ENCODE measurements at regions of chr3 and their contacts with region 1.

Region 1: DNA sequence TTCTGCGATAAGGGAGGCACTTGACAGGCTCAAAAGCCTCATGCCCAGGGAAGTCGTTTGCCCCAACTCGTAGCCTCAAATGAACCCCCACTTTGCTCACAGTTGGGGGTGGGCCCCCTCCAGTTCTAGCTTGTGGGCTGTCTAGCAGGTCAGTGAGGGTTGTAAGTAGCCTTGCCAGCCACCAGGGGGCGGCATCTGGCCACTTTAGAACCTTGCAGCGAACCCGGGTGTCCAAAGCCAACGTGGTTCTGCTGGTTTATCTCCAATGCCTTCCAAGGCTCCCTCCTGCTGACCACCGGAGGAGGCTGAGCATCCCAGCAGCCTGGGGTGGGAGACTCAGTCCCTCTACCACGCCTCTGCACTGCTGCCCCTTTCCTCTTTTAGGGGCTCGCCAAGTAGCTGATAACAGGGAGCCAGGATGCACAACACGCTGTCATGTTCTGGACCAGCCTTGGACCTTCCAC is 9.2 kb upstream of the RBSN start:
- DNase-seq: peak; percentile 72 to 84
- H3K4me3 ChIP-seq: no peak overlapping the region
- H3K4me3 Mint-ChIP-seq: no peak overlapping the region
- H3K27ac Mint-ChIP-seq: no peak overlapping the region
- H3K4me1 ChIP-seq: peaks cover 9% of the 10 kb centered on the region; the same call in 1 of the 2 replicates
- H3K4me1 Mint-ChIP-seq: peaks cover 12% of the 10 kb centered on the region
- H3K27me3 ChIP-seq: no peaks in the 10 kb centered on the region
- H3K27me3 Mint-ChIP-seq: peaks cover 3% of the 10 kb centered on the region
- CTCF ChIP-seq: peak; percentile 85 to 88

Region 2: DNA sequence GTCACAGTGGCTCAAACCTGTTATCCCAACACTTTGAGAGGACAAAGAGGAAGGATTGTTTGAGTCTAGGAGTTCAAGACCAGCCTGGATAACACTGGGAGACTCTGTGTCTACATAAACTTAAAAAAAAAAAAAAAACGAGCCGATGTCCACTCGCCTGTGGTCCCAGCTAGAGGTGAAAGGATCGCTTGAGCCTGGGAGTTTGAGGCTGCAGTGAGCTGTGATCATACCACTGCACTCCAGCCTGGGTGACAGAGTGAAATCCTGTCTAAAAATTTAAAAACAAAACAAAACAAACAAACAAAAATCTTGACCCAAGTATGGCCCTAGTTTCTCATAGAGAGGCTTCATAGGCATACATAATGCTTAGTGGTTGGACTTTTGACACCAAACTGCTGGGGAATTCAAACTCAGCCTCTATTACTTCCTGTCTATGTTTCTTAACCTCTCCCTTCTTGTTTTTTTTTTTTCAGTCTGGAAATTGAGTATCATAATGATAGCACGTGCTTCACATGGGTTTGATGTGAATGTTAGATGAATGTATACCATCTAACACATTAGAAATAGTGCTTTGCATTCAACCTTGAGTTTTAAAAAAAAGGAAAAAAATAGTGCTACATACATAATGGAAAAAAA is 51.5 kb after region 1 on chr3:
- CTCF ChIA-PET with region 1: no interaction called
- POLR2A ChIA-PET with region 1: no interaction called
- intact Hi-C with region 1: no loop called
- DNase-seq: no peak
- H3K4me3 ChIP-seq: no peak overlapping the region
- H3K4me3 Mint-ChIP-seq: no peak overlapping the region
- H3K27ac Mint-ChIP-seq: no peak overlapping the region
- H3K4me1 ChIP-seq: no peaks in the 10 kb centered on the region
- H3K4me1 Mint-ChIP-seq: no peaks in the 10 kb centered on the region
- H3K27me3 ChIP-seq: no peaks in the 10 kb centered on the region
- H3K27me3 Mint-ChIP-seq: peaks cover 12% of the 10 kb centered on the region
- CTCF ChIP-seq: no peak

Region 3: DNA sequence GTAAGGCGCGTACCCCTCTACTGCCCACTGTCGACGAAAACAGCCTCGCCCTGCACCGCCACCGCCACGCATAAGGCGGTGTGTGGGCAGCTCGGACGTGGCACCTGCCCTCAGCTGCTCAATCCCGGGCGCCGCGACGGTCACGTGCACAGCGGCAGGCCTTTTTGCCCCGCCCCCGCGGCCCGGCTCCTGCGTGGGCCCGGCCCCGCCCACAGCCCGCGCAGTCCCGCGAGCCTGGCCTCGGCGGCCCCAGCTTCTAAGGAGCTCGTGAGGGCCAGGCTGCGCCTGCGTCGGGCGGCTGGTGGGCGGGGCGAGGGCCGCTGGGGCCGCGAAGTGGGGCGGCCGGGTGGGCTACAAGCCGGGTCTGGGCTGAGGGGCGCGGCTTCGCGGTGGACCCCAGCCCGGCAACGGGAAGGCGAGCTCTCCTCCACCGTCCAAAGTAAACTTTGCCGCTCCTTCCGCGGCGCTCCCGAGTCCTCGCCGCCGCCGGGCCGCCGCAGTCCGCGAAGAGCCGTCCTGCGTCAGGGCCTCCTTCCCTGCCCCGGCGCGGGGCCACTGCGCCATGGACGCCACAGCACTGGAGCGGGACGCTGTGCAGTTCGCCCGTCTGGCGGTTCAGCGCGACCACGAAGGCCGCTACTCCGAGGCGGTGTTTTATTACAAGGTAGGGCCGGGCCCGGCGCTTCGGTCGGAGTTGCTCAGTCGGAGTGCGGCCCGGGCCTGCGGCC is 98.0 kb after region 1 on chr3 and contains the start of gene CAPN7:
- CTCF ChIA-PET with region 1: interaction called, 9 read pairs
- POLR2A ChIA-PET with region 1: no interaction called
- intact Hi-C with region 1: loop called (anchors 2 kb)
- DNase-seq: peak; percentile 93 to 96
- H3K4me3 ChIP-seq: peak within 1 kb of the TSS; percentile 85
- H3K4me3 Mint-ChIP-seq: peak within 1 kb of the TSS; percentile 87
- H3K27ac Mint-ChIP-seq: peak within 1 kb of the TSS; percentile 77
- H3K4me1 ChIP-seq: peaks cover 5% of the 10 kb centered on the region; the same call in 1 of the 2 replicates
- H3K4me1 Mint-ChIP-seq: peaks cover 21% of the 10 kb centered on the region
- H3K27me3 ChIP-seq: no peaks in the 10 kb centered on the region
- H3K27me3 Mint-ChIP-seq: no peaks in the 10 kb centered on the region
- CTCF ChIP-seq: peak; percentile 53 to 54
- total RNA-seq, gene CAPN7: 37.0 and 40.3 TPM in 2 replicates

Region 4: DNA sequence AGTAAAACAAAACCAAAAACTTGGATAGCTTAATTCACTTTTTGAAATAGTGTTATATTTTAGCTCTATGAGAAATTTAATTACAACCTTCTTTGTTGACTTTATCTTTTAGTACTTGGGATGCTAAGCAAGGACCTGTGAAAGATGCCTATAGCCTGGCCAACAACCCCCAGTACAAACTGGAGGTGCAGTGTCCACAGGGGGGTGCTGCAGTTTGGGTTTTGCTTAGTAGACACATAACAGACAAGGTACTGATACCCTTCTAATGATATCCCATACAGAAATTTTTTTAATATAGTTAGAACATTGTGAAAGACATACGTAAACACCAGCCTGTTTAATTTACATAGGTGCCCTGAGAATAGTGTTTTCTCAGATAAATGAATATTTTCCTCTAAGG is 133.2 kb after region 1 on chr3:
- CTCF ChIA-PET with region 1: no interaction called
- POLR2A ChIA-PET with region 1: no interaction called
- intact Hi-C with region 1: loop called (anchors 10 kb)
- DNase-seq: peak; percentile 40 to 49
- H3K4me3 ChIP-seq: no peak overlapping the region
- H3K4me3 Mint-ChIP-seq: no peak overlapping the region
- H3K27ac Mint-ChIP-seq: no peak overlapping the region
- H3K4me1 ChIP-seq: peaks cover 5% of the 10 kb centered on the region
- H3K4me1 Mint-ChIP-seq: peaks cover 18% of the 10 kb centered on the region
- H3K27me3 ChIP-seq: no peaks in the 10 kb centered on the region
- H3K27me3 Mint-ChIP-seq: no peaks in the 10 kb centered on the region
- CTCF ChIP-seq: peak; percentile 19 to 48

Region 5: GRCh38 chr3:15377961-15378791 is 270.1 kb after region 1 on chr3:
- CTCF ChIA-PET with region 1: no interaction called
- POLR2A ChIA-PET with region 1: no interaction called
- intact Hi-C with region 1: loop called (anchors 2 kb)
- DNase-seq: peak; percentile 92 to 93
- H3K4me3 ChIP-seq: no peak overlapping the region
- H3K4me3 Mint-ChIP-seq: peak overlapping the region; percentile 19
- H3K27ac Mint-ChIP-seq: peak overlapping the region; percentile 57
- H3K4me1 ChIP-seq: 0 out of 2 replicates have a peak, but pooled peaks cover 5% of the 10 kb centered on the region
- H3K4me1 Mint-ChIP-seq: peaks cover 6% of the 10 kb centered on the region
- H3K27me3 ChIP-seq: no peaks in the 10 kb centered on the region
- H3K27me3 Mint-ChIP-seq: no peaks in the 10 kb centered on the region
- CTCF ChIP-seq: peak; percentile 76 to 81

Region 6: DNA sequence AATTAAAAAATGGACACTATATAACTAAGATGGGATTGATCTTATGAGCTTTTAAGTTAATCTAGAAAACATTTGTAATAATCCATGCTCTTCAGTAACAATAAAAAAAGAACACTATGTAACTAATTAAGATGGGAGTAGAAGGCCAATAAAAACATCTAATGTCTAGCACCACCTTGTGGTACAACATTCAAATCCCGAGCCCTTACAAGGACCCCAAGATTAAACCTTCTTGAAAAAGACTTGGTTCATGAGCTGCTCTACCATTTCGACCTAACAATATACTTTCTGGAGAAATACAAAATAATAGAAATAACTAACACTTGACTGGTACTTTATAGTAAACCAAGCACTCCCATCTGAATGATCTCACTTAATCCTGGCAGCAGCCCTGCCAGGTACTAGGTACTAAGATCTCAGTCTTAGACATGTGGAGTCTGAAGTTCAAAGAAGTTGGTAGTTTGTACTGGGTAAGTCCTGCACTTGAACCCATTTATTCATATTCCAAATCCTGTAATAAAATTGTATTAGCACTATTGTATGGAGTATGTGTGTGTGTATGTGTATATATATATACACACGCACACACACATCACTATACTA is 297.4 kb after region 1 on chr3:
- CTCF ChIA-PET with region 1: interaction called, 5 read pairs
- POLR2A ChIA-PET with region 1: no interaction called
- intact Hi-C with region 1: loop called (anchors 10 kb)
- DNase-seq: peak in 1 of 2 experiments; percentile 39
- H3K4me3 ChIP-seq: no peak overlapping the region
- H3K4me3 Mint-ChIP-seq: no peak overlapping the region
- H3K27ac Mint-ChIP-seq: no peak overlapping the region
- H3K4me1 ChIP-seq: no peaks in the 10 kb centered on the region
- H3K4me1 Mint-ChIP-seq: no peaks in the 10 kb centered on the region
- H3K27me3 ChIP-seq: no peaks in the 10 kb centered on the region
- H3K27me3 Mint-ChIP-seq: no peaks in the 10 kb centered on the region
- CTCF ChIP-seq: peak; percentile 42 to 58

Region 7: GRCh38 chr3:15557511-15557946 is 449.4 kb after region 1 on chr3:
- CTCF ChIA-PET with region 1: no interaction called
- POLR2A ChIA-PET with region 1: no interaction called
- intact Hi-C with region 1: loop called (anchors 1 kb)
- DNase-seq: peak; percentile 71 to 73
- H3K4me3 ChIP-seq: no peak overlapping the region
- H3K4me3 Mint-ChIP-seq: no peak overlapping the region
- H3K27ac Mint-ChIP-seq: no peak overlapping the region
- H3K4me1 ChIP-seq: 0 out of 2 replicates have a peak, but pooled peaks cover 4% of the 10 kb centered on the region
- H3K4me1 Mint-ChIP-seq: peaks cover under 1% of the 10 kb centered on the region
- H3K27me3 ChIP-seq: no peaks in the 10 kb centered on the region
- H3K27me3 Mint-ChIP-seq: no peaks in the 10 kb centered on the region
- CTCF ChIP-seq: peak; percentile 22 to 54